Natural killer cell (primary cell): ENCODE measurements at regions of chr7 and their contacts with region 1.

Region 1: DNA sequence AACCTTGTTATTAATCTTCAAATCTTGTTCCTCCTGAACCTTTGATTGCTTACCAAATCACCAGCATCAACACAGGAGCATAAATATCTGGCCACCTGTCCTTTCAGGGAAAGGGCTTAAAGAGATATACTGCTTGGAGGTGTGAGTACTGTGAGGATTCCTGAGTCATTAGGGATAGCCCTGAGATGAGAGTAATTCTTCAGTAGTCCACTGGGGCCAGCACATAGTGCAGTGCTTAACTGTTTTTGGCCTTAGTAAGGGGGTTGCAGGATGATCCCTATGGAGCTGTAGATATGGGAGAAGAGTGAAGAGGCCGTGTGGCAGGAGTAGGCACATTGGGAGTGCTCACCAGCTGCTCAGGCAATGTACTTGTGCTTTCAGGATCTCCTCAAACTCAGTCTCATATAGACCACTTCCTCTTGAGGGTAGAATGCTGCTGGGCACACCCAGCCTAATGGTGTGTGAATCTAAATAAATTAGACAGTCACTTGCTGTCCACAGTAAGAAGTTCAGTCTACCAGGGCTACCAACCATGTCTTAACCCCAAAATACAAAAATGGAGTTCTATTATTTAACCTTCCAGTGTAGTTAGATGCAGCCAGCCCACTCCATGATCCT is 26.5 kb upstream of the GPR141 start:
- DNase-seq: peak in 1 of 2 donors; percentile 24
- ATAC-seq: peak; percentile 48 to 80 (median 66)
- H3K4me3 ChIP-seq: peak overlapping the region; percentile 12
- H3K4me3 Mint-ChIP-seq: peak overlapping the region; percentile 84
- H3K27ac ChIP-seq: peak overlapping the region; percentile 80
- H3K27ac Mint-ChIP-seq: peak overlapping the region; percentile 92 to 97
- H3K4me1 ChIP-seq: peaks cover 22% of the 10 kb centered on the region
- H3K4me1 Mint-ChIP-seq: peaks cover 77 to 88% of the 10 kb centered on the region in 2 donors
- H3K27me3 ChIP-seq: no peaks in the 10 kb centered on the region
- H3K27me3 Mint-ChIP-seq: no peaks in the 10 kb centered on the region
- CTCF ChIP-seq: no peak

Region 2: DNA sequence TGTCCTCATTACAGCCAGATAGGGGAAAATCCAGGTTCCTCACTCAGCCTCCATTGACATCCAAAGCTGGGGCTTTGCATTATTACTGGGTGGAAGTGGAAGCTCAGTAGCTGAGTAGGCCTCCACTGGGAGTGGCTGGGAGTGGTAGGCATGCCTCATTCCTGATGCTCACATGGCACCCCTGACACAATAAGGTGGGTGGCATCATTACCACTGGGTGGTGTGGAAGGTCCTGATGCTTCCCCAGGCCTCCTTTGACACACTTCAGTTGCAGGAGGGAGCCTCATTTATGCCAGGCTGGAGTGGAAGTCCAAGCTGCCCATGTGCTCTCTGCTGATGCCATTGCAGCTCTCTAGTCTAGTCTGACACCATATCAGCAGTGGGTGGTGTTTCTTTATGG is 21.7 kb before region 1 on chr7:
- intact Hi-C with region 1: loop called (anchors 1 kb)
- DNase-seq: no peak
- ATAC-seq: peak in 1 of 3 donors; percentile 19
- H3K4me3 ChIP-seq: no peak overlapping the region
- H3K4me3 Mint-ChIP-seq: peak overlapping the region; percentile 83
- H3K27ac ChIP-seq: peak overlapping the region; percentile 10
- H3K27ac Mint-ChIP-seq: peak overlapping the region; percentile 60 to 85
- H3K4me1 ChIP-seq: peaks cover 9% of the 10 kb centered on the region
- H3K4me1 Mint-ChIP-seq: peaks cover 77 to 86% of the 10 kb centered on the region in 2 donors
- H3K27me3 ChIP-seq: no peaks in the 10 kb centered on the region
- H3K27me3 Mint-ChIP-seq: no peaks in the 10 kb centered on the region
- CTCF ChIP-seq: no peak

Region 3: DNA sequence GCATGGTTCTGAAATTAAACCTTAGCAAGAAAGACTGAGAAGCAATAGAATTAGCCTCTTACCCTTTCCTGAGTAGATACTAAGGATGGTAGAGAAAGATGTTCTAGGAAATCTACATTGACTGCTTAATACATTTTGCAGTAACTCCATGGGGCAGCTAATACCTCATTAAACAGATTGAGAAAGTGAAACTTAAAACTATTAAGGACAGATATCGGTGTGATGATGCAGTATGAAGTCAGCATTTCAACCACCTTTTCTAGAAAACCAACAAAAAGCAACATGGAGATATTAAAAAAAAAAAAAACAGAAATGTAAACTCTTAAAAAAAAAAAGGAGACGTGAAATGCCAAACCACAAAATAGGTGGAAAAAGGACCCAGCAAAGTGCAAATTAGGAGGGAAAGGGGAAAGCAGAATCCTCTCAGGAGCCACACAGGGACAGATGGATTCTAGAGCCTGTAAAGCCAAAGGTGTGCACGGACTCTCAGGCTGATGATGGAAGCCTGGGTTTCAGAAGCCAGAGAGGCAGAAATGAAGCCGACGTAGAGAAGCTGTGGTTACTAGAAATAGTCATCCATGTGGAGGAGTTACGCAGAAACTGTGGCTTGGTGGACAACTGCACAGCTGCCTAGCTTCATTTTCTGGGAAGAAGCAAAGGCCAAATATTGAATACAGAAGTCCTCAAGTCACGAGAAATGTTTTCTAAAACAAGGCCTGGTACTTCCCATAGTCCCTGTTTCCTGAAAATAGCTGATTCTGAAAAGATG is 11.6 kb before region 1 on chr7:
- intact Hi-C with region 1: loop called (anchors 1 kb)
- DNase-seq: no peak
- ATAC-seq: peak; percentile 67 to 76 (median 73)
- H3K4me3 ChIP-seq: peak overlapping the region; percentile 19
- H3K4me3 Mint-ChIP-seq: peak overlapping the region; percentile 97
- H3K27ac ChIP-seq: peak overlapping the region; percentile 70
- H3K27ac Mint-ChIP-seq: peak overlapping the region; percentile 91 to 97
- H3K4me1 ChIP-seq: peaks cover 16% of the 10 kb centered on the region
- H3K4me1 Mint-ChIP-seq: peaks cover 37 to 57% of the 10 kb centered on the region in 2 donors
- H3K27me3 ChIP-seq: no peaks in the 10 kb centered on the region
- H3K27me3 Mint-ChIP-seq: no peaks in the 10 kb centered on the region
- CTCF ChIP-seq: no peak